AG04450 (cell line): ENCODE measurements at regions of chr16 and their contacts with region 1.

Region 1: GRCh38 chr16:2531767-2532493 is 722 bp upstream of the CEMP1 start:
- DNase-seq: peak; percentile 88
- H3K4me3 ChIP-seq: peak overlapping the region; percentile 65
- H3K27ac ChIP-seq: peak overlapping the region; percentile 68
- H3K27me3 ChIP-seq: no peaks in the 10 kb centered on the region
- CTCF ChIP-seq: no peak

Region 2: DNA sequence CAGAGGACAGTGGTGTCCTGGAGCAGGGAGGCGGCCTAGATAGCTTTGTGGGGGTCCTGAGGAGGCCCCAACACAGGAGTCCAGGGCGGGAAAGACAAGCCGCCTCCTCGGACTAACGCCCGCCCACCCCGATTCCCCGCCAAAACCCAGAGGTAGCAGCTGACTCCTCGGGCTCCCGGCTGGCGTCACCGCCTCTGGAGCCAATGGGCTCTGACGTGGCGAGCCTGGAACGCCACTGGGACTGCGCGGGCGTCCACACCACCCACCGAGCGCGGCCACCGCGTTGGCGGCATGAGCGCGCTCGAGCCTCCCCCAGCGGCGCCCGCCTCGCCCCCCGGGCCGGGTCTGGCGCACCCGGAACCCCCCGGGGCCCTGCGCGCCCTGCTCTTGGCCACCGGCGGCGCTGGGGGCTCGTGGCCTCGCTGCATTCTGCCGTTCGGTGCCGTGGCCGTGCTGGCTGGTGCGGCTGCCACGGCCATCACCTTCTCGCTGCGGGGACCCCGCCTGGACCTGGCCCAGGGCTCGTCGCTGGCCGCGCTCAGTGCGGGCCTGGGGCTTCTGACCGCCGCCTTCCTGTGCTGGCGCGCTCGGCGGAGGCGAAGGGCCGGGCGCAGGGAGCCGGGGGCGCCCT is 64.3 kb before region 1 on chr16:
- CTCF ChIA-PET with region 1: no interaction called
- POLR2A ChIA-PET with region 1: no interaction called
- DNase-seq: no peak
- H3K4me3 ChIP-seq: peak overlapping the region; percentile 56
- H3K27ac ChIP-seq: no peak overlapping the region
- H3K27me3 ChIP-seq: no peaks in the 10 kb centered on the region
- CTCF ChIP-seq: no peak

Region 3: DNA sequence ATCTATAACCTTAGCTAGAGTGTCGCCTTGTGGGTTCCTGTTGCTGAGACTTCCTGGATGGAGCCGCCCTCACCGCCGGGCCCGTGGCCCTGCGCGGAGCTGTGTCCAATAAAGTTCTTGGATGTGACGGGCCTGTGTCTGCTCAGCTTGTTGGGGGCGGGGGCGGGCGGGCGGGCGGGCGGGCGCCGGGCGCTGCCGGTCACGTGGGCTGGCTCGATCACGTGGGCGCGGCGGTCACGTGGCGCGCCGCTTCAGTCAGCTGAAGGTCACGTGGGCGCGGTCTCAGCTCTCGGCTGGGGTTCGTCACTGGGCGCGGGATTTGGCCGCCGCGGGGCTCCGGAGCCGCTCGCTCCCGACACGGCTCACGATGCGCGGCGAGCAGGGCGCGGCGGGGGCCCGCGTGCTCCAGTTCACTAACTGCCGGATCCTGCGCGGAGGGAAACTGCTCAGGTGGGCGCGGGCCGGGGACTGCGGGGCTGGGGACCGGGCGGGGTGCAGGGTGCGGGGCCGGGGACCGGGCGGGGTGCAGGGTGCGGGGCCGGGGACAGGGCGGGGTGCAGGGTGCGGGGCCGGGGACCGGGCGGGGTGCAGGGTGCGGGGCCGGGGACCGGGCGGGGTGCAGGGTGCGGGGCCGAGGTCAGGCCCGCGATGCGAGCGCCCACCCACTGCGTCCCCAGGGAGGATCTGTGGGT is 11.7 kb before region 1 on chr16 and contains the start of gene AMDHD2:
- CTCF ChIA-PET with region 1: no interaction called
- POLR2A ChIA-PET with region 1: interaction called, 22 read pairs
- DNase-seq: peak; percentile 71
- H3K4me3 ChIP-seq: peak within 1 kb of the TSS; percentile 73
- H3K27ac ChIP-seq: peak within 1 kb of the TSS; percentile 52
- H3K27me3 ChIP-seq: no peaks in the 10 kb centered on the region
- CTCF ChIP-seq: no peak
- polyA plus RNA-seq, gene AMDHD2: 7.7 and 11.9 TPM in 2 replicates

Region 4: DNA sequence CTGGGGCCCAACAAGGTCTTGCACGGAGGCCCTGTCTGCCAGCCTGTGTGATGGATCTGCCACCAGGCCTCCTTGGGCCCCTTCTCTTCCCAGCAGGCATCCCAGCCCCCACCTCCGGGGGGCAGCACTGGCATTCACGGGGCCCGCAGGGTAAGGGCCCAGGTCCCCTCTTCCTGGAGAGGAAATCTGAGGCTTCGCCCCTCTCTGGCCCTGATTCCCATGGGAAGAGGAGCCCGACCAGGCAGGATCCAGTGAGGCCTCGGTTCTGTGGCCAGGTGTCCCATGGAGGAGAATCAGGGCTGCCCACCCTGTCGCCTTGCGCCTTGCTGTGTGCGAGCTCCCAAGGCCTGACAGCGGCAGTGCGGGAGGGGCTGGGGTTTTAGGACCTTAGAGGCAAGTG is 54.3 kb after region 1 on chr16:
- CTCF ChIA-PET with region 1: no interaction called
- POLR2A ChIA-PET with region 1: no interaction called
- DNase-seq: no peak
- H3K4me3 ChIP-seq: no peak overlapping the region
- H3K27ac ChIP-seq: no peak overlapping the region
- H3K27me3 ChIP-seq: no peaks in the 10 kb centered on the region
- CTCF ChIP-seq: no peak